ENCODE measurements at regions of chr11 and their contacts with region 1.

Region 1: DNA sequence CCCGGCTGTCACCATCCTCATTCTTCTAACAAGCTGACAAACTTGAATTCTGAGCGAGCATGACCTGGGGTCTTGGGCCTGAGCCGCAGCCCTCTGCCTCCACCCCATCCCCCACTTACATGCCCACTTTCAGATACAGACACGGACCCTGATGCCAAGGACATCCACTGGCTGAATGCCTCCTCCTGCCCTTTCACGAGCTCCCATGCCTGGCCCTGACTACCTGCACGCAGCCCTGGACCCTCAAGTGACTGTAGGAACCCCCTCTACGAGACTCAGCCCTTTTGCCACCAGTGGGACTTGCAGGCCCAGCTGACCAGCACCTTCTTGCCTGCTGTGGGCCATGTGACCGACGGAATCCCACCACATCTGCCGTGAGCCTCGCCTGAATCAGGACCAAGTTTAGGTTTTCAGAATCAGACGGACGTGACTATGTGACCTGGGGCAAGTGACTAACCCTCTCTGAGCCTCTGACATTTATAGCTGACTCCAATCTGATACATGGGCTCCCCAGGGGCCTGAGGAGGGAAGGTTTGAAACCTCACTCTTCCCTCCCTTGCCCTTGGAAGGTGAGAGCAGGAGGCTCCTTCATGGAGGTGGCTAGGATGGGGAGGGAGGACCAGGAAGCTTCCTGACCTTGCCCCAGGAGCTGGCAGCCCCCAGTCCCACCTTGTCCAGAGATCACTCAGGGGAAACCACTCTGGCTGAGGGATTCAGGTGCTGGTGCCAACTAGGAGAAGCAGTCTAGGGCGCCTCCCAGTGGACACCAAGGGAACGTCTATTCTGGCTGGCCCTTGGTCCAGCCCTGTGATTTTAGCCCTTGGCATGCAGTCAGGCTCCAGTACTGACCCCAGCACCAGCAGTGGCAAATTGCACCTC is 46.9 kb upstream of the SYT7 start:
- DNase-seq: peak; percentile 70 to 80
- H3K4me3 ChIP-seq: no peak overlapping the region
- H3K27ac ChIP-seq: no peak overlapping the region
- H3K4me1 ChIP-seq: peaks cover 36% of the 10 kb centered on the region
- H3K27me3 ChIP-seq: no peaks in the 10 kb centered on the region
- CTCF ChIP-seq: peak; percentile 96

Region 2: GRCh38 chr11:61477727-61478148 is 150.1 kb before region 1 on chr11:
- CTCF ChIA-PET with region 1: interaction called, 3 read pairs
- POLR2A ChIA-PET with region 1: no interaction called
- intact Hi-C with region 1: loop called (anchors 1 kb)
- DNase-seq: peak in 1 of 2 experiments; percentile 50
- H3K4me3 ChIP-seq: no peak overlapping the region
- H3K27ac ChIP-seq: no peak overlapping the region
- H3K4me1 ChIP-seq: peaks cover 24% of the 10 kb centered on the region
- H3K27me3 ChIP-seq: no peaks in the 10 kb centered on the region
- CTCF ChIP-seq: peak; percentile 100

Region 3: GRCh38 chr11:61539006-61539405 is 88.8 kb before region 1 on chr11:
- CTCF ChIA-PET with region 1: no interaction called
- POLR2A ChIA-PET with region 1: no interaction called
- intact Hi-C with region 1: loop called (anchors 2 kb)
- DNase-seq: no peak
- H3K4me3 ChIP-seq: no peak overlapping the region
- H3K27ac ChIP-seq: no peak overlapping the region
- H3K4me1 ChIP-seq: peaks cover 21% of the 10 kb centered on the region
- H3K27me3 ChIP-seq: peaks cover 8% of the 10 kb centered on the region; the same call in 1 of the 2 replicates
- CTCF ChIP-seq: no peak

Region 4: GRCh38 chr11:61581030-61581928 is 46.5 kb before region 1 on chr11 and contains the start of gene SYT7:
- CTCF ChIA-PET with region 1: no interaction called
- POLR2A ChIA-PET with region 1: interaction called, 16 read pairs
- intact Hi-C with region 1: loop called (anchors 1 kb)
- DNase-seq: peak; percentile 90 to 99
- H3K4me3 ChIP-seq: peak within 1 kb of the TSS; percentile 57; the same call in 1 of the 2 replicates
- H3K27ac ChIP-seq: no peak within 1 kb of the TSS
- H3K4me1 ChIP-seq: peaks cover 4% of the 10 kb centered on the region; the same call in 1 of the 2 replicates
- H3K27me3 ChIP-seq: peaks cover 37% of the 10 kb centered on the region
- CTCF ChIP-seq: peak; percentile 28; the same call in 1 of the 2 replicates
- total RNA-seq, gene SYT7: 4.0 and 8.9 TPM in 2 replicates

Region 5: DNA sequence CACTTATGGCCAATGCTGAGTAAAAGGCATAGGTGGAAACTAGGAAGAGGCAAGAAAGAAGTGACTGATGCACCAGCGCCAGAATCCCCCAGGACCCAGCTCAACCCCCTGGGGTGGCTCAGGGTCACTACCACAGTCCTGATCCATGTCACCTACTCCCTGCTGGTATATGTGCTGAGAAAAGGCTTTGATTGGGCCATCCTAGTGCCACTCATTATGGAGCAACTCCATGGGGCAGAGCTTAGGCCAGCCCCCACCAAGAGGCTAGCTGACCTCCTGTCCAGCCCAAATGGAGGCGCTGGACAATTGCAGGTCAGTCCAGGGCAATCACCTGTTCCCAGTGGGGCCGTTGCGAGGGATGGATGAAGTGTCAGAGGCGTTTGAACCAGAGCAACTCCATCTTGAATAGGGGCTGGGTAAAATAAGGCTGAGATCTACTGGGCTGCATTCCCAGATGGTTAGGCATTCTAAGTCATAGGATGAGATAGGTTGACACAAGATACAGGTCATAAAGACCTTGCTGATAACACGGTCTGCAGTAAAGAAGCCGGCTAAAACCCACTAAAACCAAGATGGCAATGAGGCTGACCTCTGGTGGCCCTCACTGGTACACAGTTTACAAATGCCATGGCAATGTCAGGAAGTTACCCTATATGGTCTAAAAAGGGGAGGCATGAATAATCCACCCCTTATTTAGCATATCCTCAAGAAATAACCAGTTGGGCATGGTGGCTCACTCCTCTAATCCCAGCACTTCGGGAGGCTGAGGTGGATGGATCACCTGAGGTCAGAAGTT is 31.8 kb after region 1 on chr11:
- CTCF ChIA-PET with region 1: no interaction called
- POLR2A ChIA-PET with region 1: no interaction called
- intact Hi-C with region 1: no loop called
- DNase-seq: no peak
- H3K4me3 ChIP-seq: no peak overlapping the region
- H3K27ac ChIP-seq: no peak overlapping the region
- H3K4me1 ChIP-seq: no peaks in the 10 kb centered on the region
- H3K27me3 ChIP-seq: peaks cover 6% of the 10 kb centered on the region; the same call in 1 of the 2 replicates
- CTCF ChIP-seq: peak; percentile 51; the same call in 1 of the 2 replicates

Region 6: GRCh38 chr11:61695917-61696316 is 68.1 kb after region 1 on chr11:
- CTCF ChIA-PET with region 1: no interaction called
- POLR2A ChIA-PET with region 1: no interaction called
- intact Hi-C with region 1: no loop called
- DNase-seq: peak; percentile 91 to 94
- H3K4me3 ChIP-seq: peak overlapping the region; percentile 34; the same call in 1 of the 2 replicates
- H3K27ac ChIP-seq: peak overlapping the region; percentile 96
- H3K4me1 ChIP-seq: peaks cover 73% of the 10 kb centered on the region
- H3K27me3 ChIP-seq: no peaks in the 10 kb centered on the region
- CTCF ChIP-seq: no peak